ENCODE measurements at regions of chr5 and their contacts with region 1.

Region 1: DNA sequence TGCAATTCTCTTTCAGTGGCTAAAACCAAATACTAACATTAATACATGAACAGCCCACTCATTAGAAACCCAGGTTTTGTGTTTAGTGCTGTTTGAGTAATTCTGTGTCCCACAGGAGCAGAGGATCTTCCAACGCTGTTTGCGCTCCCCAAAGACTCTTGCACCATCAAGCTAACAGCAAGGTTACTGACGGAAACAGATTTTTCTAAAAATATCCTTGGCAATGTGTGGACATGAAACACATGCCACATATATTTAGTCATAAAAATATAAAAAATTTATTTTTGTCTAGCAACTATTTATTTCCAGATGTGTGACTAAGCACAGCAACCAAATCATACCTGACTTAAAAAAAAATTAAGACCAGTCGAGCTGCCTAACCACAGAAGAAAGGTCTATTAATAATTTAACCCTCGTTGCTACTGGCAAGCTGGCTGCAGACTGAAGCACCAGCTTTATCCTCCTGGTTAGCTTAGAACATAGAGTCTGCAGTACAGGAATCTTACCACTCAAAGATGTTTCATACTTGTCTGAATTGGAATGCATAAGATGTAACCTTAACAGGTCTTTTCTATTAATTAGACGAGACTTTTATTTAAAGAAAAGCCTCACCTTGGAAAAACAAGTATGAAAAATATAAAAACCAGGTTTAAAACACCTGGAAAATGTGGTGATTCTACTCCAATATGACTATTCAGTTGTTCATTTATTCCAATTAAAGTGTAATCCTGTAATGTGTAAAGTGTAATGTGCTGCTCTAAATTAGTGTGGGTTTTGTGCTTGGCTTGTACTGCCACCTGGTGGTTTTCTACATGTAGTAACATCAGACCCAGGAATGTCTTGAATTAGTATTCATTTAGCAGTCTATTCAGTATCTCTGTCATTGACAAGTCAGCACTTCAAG is 272.5 kb downstream of the EPB41L4A start:
- DNase-seq: peak; percentile 46
- CTCF ChIP-seq: peak; percentile 59

Region 2: DNA sequence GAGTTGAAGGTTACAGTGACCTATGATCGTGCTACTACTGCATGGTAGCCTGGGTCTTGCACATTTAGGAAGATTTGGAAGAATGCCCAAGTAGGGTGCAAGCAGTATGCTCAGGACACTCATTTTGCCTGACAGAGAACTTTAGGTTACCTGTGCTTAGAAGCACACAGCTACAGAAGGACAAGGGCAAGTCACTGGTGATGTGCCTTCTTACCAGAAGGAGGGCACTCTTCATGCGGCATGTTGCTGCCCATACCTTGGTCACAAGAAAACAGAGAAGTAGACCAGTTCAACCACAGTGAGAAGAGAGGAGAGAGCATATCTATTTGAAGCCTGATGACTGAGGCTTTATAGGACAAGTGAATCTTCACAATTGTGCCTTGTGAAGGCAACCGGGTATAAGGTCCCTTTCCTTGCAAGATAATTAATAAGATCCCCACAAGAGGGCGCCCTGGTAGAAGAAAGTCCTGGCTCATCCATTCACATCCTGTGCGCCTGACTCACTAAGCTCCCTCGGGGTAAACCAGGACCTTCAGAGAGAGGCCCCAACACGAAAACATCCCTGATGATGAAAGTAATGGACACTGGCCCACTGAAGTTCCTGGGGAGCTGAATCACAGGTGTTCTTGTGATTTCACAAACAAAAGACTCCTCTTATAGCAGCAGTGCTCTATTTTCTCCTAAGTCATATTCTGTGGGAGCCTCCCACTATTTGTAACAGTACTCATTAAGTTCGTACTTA is 596.1 kb before region 1 on chr5:
- in situ Hi-C with region 1: loop called (anchors 5 kb)
- DNase-seq: peak; percentile 49
- CTCF ChIP-seq: peak; percentile 67